ENCODE measurements at regions of chr7 and their contacts with region 1.

Region 1: GRCh38 chr7:70808876-70809275 is 323.1 kb upstream of the GALNT17 start:
- DNase-seq: no peak
- ATAC-seq: no peak
- H3K4me3 ChIP-seq: no peak overlapping the region
- H3K27ac ChIP-seq: no peak overlapping the region
- H3K4me1 ChIP-seq: no peaks in the 10 kb centered on the region
- H3K27me3 ChIP-seq: no peaks in the 10 kb centered on the region
- CTCF ChIP-seq: no peak
- POLR2A ChIP-seq: no peak
- RAD21 ChIP-seq: no peak

Region 2: DNA sequence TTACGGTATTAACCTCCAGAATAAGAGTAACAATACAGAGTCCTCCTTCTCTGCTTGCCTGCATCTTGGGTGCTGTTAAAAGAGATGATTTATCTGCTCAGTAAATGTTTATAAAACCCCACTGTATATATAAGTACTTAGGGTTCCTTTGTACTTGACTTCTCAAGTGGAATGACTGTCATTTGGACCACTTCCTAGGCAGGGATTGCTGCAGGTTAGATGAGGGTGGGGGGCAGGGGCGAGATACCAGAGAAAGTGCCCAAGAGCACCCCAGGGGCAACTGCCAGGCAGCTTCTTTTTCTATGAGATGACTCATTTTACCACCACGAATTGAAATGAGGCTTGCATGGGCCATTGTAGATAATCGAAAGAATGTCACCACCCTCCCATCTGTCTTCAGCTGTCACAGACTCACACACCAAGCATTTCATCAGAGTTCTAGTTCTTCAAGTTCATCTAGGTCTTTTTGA is 98.8 kb before region 1 on chr7:
- CTCF ChIA-PET with region 1: no interaction called
- POLR2A ChIA-PET with region 1: no interaction called
- dilution Hi-C with region 1: no loop called
- in situ Hi-C with region 1: no loop called
- intact Hi-C with region 1: no loop called
- DNase-seq: peak; percentile 76
- ATAC-seq: peak; percentile 82
- H3K4me3 ChIP-seq: no peak overlapping the region
- H3K27ac ChIP-seq: no peak overlapping the region
- H3K4me1 ChIP-seq: peaks cover 5% of the 10 kb centered on the region; the same call in 1 of the 2 replicates
- H3K27me3 ChIP-seq: no peaks in the 10 kb centered on the region
- CTCF ChIP-seq: no peak
- POLR2A ChIP-seq: no peak
- RAD21 ChIP-seq: no peak

Region 3: GRCh38 chr7:70752794-70753241 is 56.1 kb before region 1 on chr7:
- CTCF ChIA-PET with region 1: no interaction called
- POLR2A ChIA-PET with region 1: no interaction called
- dilution Hi-C with region 1: no loop called
- in situ Hi-C with region 1: no loop called
- intact Hi-C with region 1: no loop called
- DNase-seq: peak; percentile 57
- ATAC-seq: peak; percentile 51
- H3K4me3 ChIP-seq: no peak overlapping the region
- H3K27ac ChIP-seq: no peak overlapping the region
- H3K4me1 ChIP-seq: no peaks in the 10 kb centered on the region
- H3K27me3 ChIP-seq: no peaks in the 10 kb centered on the region
- CTCF ChIP-seq: no peak
- POLR2A ChIP-seq: no peak
- RAD21 ChIP-seq: no peak

Region 4: DNA sequence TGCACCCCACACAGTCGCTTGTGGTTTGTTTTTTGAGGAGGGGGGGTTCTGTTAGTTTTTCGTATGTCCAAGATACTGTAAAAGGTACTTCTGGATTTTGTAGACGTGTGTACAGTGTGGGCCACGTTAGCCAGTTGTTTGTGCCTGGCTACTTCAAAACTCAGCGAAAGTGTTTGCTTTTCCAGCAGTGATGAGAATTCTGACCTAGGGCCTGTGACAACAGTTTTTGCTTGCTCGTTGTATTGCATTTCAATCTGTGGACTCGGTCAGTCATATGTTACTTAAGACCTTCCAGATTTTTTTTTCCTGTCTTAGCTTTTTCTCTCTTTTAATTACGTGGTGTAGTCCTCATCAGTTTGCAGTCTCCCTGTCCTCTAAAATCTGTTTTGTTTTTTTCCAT is 15.8 kb before region 1 on chr7:
- CTCF ChIA-PET with region 1: no interaction called
- POLR2A ChIA-PET with region 1: interaction called, 12 read pairs
- dilution Hi-C with region 1: no loop called
- in situ Hi-C with region 1: no loop called
- intact Hi-C with region 1: no loop called
- DNase-seq: no peak
- ATAC-seq: no peak
- H3K4me3 ChIP-seq: no peak overlapping the region
- H3K27ac ChIP-seq: no peak overlapping the region
- H3K4me1 ChIP-seq: no peaks in the 10 kb centered on the region
- H3K27me3 ChIP-seq: no peaks in the 10 kb centered on the region
- CTCF ChIP-seq: no peak
- POLR2A ChIP-seq: no peak
- RAD21 ChIP-seq: no peak

Measured in IMR-90 (cell line).